PC-3 (cell line): ENCODE measurements at regions of chr11 and their contacts with region 1.

Region 1: GRCh38 chr11:57834852-57835251 is 73.2 kb downstream of the CTNND1 start:
- DNase-seq: no peak
- ATAC-seq: no peak
- H3K4me3 ChIP-seq: no peak overlapping the region
- H3K27ac ChIP-seq: no peak overlapping the region
- H3K4me1 ChIP-seq: no peaks in the 10 kb centered on the region
- H3K27me3 ChIP-seq: peaks cover 17% of the 10 kb centered on the region; the same call in 1 of the 2 replicates
- CTCF ChIP-seq: no peak

Region 2: GRCh38 chr11:57735619-57736298 is 99.1 kb before region 1 on chr11:
- CTCF ChIA-PET with region 1: interaction called, 10 read pairs
- POLR2A ChIA-PET with region 1: no interaction called
- intact Hi-C with region 1: no loop called
- DNase-seq: no peak
- ATAC-seq: no peak
- H3K4me3 ChIP-seq: no peak overlapping the region
- H3K27ac ChIP-seq: no peak overlapping the region
- H3K4me1 ChIP-seq: peaks cover 4% of the 10 kb centered on the region
- H3K27me3 ChIP-seq: no peaks in the 10 kb centered on the region
- CTCF ChIP-seq: no peak

Region 3: GRCh38 chr11:57792060-57792541 is 42.8 kb before region 1 on chr11:
- CTCF ChIA-PET with region 1: no interaction called
- POLR2A ChIA-PET with region 1: no interaction called
- intact Hi-C with region 1: no loop called
- DNase-seq: no peak
- ATAC-seq: peak; percentile 3
- H3K4me3 ChIP-seq: no peak overlapping the region
- H3K27ac ChIP-seq: peak overlapping the region; percentile 95
- H3K4me1 ChIP-seq: peaks cover 35% of the 10 kb centered on the region
- H3K27me3 ChIP-seq: no peaks in the 10 kb centered on the region
- CTCF ChIP-seq: no peak